ENCODE measurements at regions of chr16 and their contacts with region 1.

Region 1: GRCh38 chr16:24580665-24581064 is 41.3 kb downstream of the RBBP6 start:
- DNase-seq: no peak
- ATAC-seq: no peak
- H3K4me3 ChIP-seq: no peak overlapping the region
- H3K27ac ChIP-seq: no peak overlapping the region
- H3K4me1 ChIP-seq: peaks cover 0 to 3% (median 0%) of the 10 kb centered on the region in 12 donors
- H3K27me3 ChIP-seq: no peaks in the 10 kb centered on the region
- CTCF ChIP-seq: peak in 11 of 12 donors; percentile 11 to 55 (median 33)
- POLR2A ChIP-seq: no peak

Region 2: GRCh38 chr16:24525970-24526559 is 54.6 kb before region 1 on chr16:
- intact Hi-C with region 1: loop called in 1 of 10 experiments (anchors 10 kb)
- DNase-seq: no peak
- ATAC-seq: no peak
- H3K4me3 ChIP-seq: no peak overlapping the region
- H3K27ac ChIP-seq: no peak overlapping the region
- H3K4me1 ChIP-seq: peaks cover 0 to 10% (median 0%) of the 10 kb centered on the region in 12 donors
- H3K27me3 ChIP-seq: peaks cover 0 to 3% (median 0%) of the 10 kb centered on the region in 9 donors
- CTCF ChIP-seq: no peak
- POLR2A ChIP-seq: no peak

Region 3: DNA sequence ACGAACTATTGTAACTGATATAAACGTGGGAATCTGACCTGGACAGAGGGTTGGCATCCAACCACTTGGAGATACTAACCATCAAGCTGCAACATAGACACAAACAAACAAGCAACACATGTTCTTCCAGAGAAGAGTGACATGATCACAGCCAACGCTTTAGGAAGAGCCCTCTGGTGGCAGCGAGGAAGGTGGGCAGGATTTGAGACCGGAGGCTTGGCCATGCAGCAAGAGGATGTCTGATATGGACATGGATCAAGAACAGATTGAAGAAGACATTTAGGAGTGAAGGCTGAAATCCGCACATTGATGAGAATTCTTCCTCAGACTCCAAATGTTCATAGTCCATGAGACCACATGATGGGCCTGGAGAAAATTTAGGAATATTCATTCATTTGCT is 108.5 kb after region 1 on chr16:
- intact Hi-C with region 1: loop called in 7 of 10 experiments (anchors 5 to 10 kb)
- DNase-seq: no peak
- ATAC-seq: peak; percentile 23 to 65 (median 58)
- H3K4me3 ChIP-seq: no peak overlapping the region
- H3K27ac ChIP-seq: no peak overlapping the region
- H3K4me1 ChIP-seq: peaks cover 0 to 15% (median 2%) of the 10 kb centered on the region in 12 donors
- H3K27me3 ChIP-seq: no peaks in the 10 kb centered on the region
- CTCF ChIP-seq: peak; percentile 2 to 66 (median 50)
- POLR2A ChIP-seq: no peak

Region 4: GRCh38 chr16:24694931-24695330 is 114.3 kb after region 1 on chr16:
- intact Hi-C with region 1: loop called in 1 of 10 experiments (anchors 10 kb)
- DNase-seq: no peak
- ATAC-seq: no peak
- H3K4me3 ChIP-seq: no peak overlapping the region
- H3K27ac ChIP-seq: no peak overlapping the region
- H3K4me1 ChIP-seq: no peaks in the 10 kb centered on the region
- H3K27me3 ChIP-seq: no peaks in the 10 kb centered on the region
- CTCF ChIP-seq: no peak
- POLR2A ChIP-seq: no peak

Region 5: GRCh38 chr16:24800586-24800985 is 219.9 kb after region 1 on chr16:
- intact Hi-C with region 1: loop called in 1 of 10 experiments (anchors 5 kb)
- DNase-seq: no peak
- ATAC-seq: peak; percentile 21 to 60 (median 56)
- H3K4me3 ChIP-seq: no peak overlapping the region
- H3K27ac ChIP-seq: no peak overlapping the region
- H3K4me1 ChIP-seq: no peaks in the 10 kb centered on the region
- H3K27me3 ChIP-seq: no peaks in the 10 kb centered on the region
- CTCF ChIP-seq: peak in 7 of 12 donors; percentile 6 to 44 (median 25)
- POLR2A ChIP-seq: no peak